ENCODE measurements at regions of chr19 and their contacts with region 1.

Region 1: GRCh38 chr19:17448131-17448967 is at the start of gene TMEM221:
- DNase-seq: peak; percentile 16 to 76 (median 59)
- ATAC-seq: peak; percentile 81
- H3K4me3 ChIP-seq: peak within 1 kb of the TSS in 1 of 2 experiments; percentile 15
- H3K4me3 Mint-ChIP-seq: peak within 1 kb of the TSS; percentile 53
- H3K27ac ChIP-seq: no peak within 1 kb of the TSS
- H3K27ac Mint-ChIP-seq: no peak within 1 kb of the TSS
- H3K4me1 ChIP-seq: no peaks in the 10 kb centered on the region
- H3K4me1 Mint-ChIP-seq: peaks cover 11% of the 10 kb centered on the region
- H3K27me3 ChIP-seq: peaks cover 3 to 20% of the 10 kb centered on the region in 2 experiments
- H3K27me3 Mint-ChIP-seq: peaks cover 17% of the 10 kb centered on the region
- CTCF ChIP-seq: peak; percentile 61
- total RNA-seq, gene TMEM221: not detected

Region 2: DNA sequence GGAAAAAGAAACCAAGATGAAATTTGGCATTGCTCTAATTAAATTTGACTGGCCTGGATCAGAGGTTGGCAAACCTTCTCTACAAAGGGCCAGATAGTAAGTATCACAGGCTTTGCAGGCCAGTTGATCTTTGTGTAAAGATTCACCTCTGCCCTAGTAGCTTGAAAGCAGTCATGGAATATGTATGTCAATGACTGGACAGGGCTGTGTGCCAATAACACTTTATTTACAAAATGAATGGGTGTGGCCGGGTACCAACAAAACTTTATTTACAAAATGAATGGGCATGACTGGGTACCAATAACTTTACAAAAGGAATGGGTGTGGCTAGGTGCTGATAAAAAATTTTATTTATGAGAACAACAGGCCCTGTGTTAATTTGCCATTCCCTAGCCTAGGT is 599.2 kb before region 1 on chr19:
- CTCF ChIA-PET with region 1: no interaction called
- POLR2A ChIA-PET with region 1: no interaction called
- intact Hi-C with region 1: no loop called
- DNase-seq: no peak
- ATAC-seq: no peak
- H3K4me3 ChIP-seq: no peak overlapping the region
- H3K4me3 Mint-ChIP-seq: no peak overlapping the region
- H3K27ac ChIP-seq: no peak overlapping the region
- H3K27ac Mint-ChIP-seq: no peak overlapping the region
- H3K4me1 ChIP-seq: no peaks in the 10 kb centered on the region
- H3K4me1 Mint-ChIP-seq: no peaks in the 10 kb centered on the region
- H3K27me3 ChIP-seq: no peaks in the 10 kb centered on the region
- H3K27me3 Mint-ChIP-seq: no peaks in the 10 kb centered on the region
- CTCF ChIP-seq: no peak

Region 3: GRCh38 chr19:17419621-17420466 is 28.5 kb before region 1 on chr19 and contains the start of gene MVB12A:
- CTCF ChIA-PET with region 1: interaction called, 4 read pairs
- POLR2A ChIA-PET with region 1: interaction called, 5 read pairs
- intact Hi-C with region 1: loop called in 1 of 2 experiments (anchors 1 kb)
- DNase-seq: peak; percentile 90 to 100 (median 96)
- ATAC-seq: peak; percentile 98
- H3K4me3 ChIP-seq: peak within 1 kb of the TSS; percentile 69 to 76
- H3K4me3 Mint-ChIP-seq: peak within 1 kb of the TSS; percentile 89
- H3K27ac ChIP-seq: peak within 1 kb of the TSS; percentile 47 to 51
- H3K27ac Mint-ChIP-seq: peak within 1 kb of the TSS; percentile 80
- H3K4me1 ChIP-seq: peaks cover 19% of the 10 kb centered on the region
- H3K4me1 Mint-ChIP-seq: peaks cover 18% of the 10 kb centered on the region
- H3K27me3 ChIP-seq: no peaks in the 10 kb centered on the region
- H3K27me3 Mint-ChIP-seq: no peaks in the 10 kb centered on the region
- CTCF ChIP-seq: no peak
- total RNA-seq, gene MVB12A: 9.1 to 10.4 TPM

Region 4: DNA sequence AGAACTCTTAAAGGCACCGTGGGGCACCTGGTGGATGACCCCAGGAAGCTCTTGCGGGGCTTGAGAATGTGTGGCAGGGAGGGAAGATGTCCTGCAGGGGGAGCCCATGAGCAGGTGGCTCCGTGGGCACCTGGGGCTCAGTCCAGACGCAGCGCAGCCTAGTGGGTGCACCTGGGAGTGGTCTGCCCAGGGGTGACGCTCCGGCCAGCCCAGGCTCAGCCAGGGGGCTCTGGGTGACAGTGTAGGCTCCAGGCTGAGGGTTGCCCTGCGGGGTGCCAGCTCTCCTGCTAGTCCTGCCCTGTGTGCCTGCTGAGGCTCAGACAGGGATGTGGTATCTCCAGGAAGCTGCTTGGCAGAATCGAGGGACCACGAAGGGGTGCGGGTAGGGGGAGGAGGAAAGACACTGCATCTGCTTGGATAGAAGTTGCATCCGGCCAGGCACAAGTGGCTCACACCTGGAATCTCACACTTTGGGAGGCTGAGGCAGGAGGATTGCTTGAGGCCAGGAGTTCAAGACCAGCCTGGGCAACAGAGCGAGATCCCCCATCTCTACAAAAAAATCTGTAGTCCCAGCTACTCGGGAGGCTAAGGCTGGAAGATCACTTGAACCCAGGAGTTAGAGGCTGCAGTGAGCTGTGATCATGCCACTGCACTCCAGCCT is 48.1 kb after region 1 on chr19:
- CTCF ChIA-PET with region 1: interaction called, 4 read pairs
- POLR2A ChIA-PET with region 1: no interaction called
- intact Hi-C with region 1: loop called in 1 of 2 experiments (anchors 1 kb)
- DNase-seq: peak; percentile 63 to 90 (median 80)
- ATAC-seq: peak; percentile 99
- H3K4me3 ChIP-seq: no peak overlapping the region
- H3K4me3 Mint-ChIP-seq: no peak overlapping the region
- H3K27ac ChIP-seq: no peak overlapping the region
- H3K27ac Mint-ChIP-seq: no peak overlapping the region
- H3K4me1 ChIP-seq: peaks cover 21% of the 10 kb centered on the region
- H3K4me1 Mint-ChIP-seq: peaks cover 27% of the 10 kb centered on the region
- H3K27me3 ChIP-seq: no peaks in the 10 kb centered on the region
- H3K27me3 Mint-ChIP-seq: no peaks in the 10 kb centered on the region
- CTCF ChIP-seq: peak; percentile 90

Region 5: GRCh38 chr19:17579661-17580244 is 131.4 kb after region 1 on chr19:
- CTCF ChIA-PET with region 1: no interaction called
- POLR2A ChIA-PET with region 1: no interaction called
- intact Hi-C with region 1: loop called (anchors 1 kb)
- DNase-seq: peak in 2 of 9 experiments; percentile 36 to 43
- ATAC-seq: peak; percentile 52
- H3K4me3 ChIP-seq: no peak overlapping the region
- H3K4me3 Mint-ChIP-seq: no peak overlapping the region
- H3K27ac ChIP-seq: no peak overlapping the region
- H3K27ac Mint-ChIP-seq: peak overlapping the region; percentile 55
- H3K4me1 ChIP-seq: no peaks in the 10 kb centered on the region
- H3K4me1 Mint-ChIP-seq: no peaks in the 10 kb centered on the region
- H3K27me3 ChIP-seq: no peaks in the 10 kb centered on the region
- H3K27me3 Mint-ChIP-seq: no peaks in the 10 kb centered on the region
- CTCF ChIP-seq: no peak

Region 6: GRCh38 chr19:17692566-17692965 is 244.2 kb after region 1 on chr19:
- CTCF ChIA-PET with region 1: no interaction called
- POLR2A ChIA-PET with region 1: no interaction called
- intact Hi-C with region 1: no loop called
- DNase-seq: no peak
- ATAC-seq: no peak
- H3K4me3 ChIP-seq: no peak overlapping the region
- H3K4me3 Mint-ChIP-seq: no peak overlapping the region
- H3K27ac ChIP-seq: no peak overlapping the region
- H3K27ac Mint-ChIP-seq: no peak overlapping the region
- H3K4me1 ChIP-seq: peaks cover 5% of the 10 kb centered on the region
- H3K4me1 Mint-ChIP-seq: peaks cover 6% of the 10 kb centered on the region
- H3K27me3 ChIP-seq: peaks cover 8 to 15% of the 10 kb centered on the region in 2 experiments
- H3K27me3 Mint-ChIP-seq: peaks cover 50% of the 10 kb centered on the region
- CTCF ChIP-seq: no peak

Region 7: GRCh38 chr19:17784201-17785008 is 336.1 kb after region 1 on chr19:
- CTCF ChIA-PET with region 1: no interaction called
- POLR2A ChIA-PET with region 1: no interaction called
- intact Hi-C with region 1: loop called in 1 of 2 experiments (anchors 5 kb)
- DNase-seq: peak; percentile 55 to 81 (median 74)
- ATAC-seq: peak; percentile 94
- H3K4me3 ChIP-seq: no peak overlapping the region
- H3K4me3 Mint-ChIP-seq: no peak overlapping the region
- H3K27ac ChIP-seq: no peak overlapping the region
- H3K27ac Mint-ChIP-seq: no peak overlapping the region
- H3K4me1 ChIP-seq: peaks cover 4% of the 10 kb centered on the region
- H3K4me1 Mint-ChIP-seq: peaks cover 11% of the 10 kb centered on the region
- H3K27me3 ChIP-seq: no peaks in the 10 kb centered on the region
- H3K27me3 Mint-ChIP-seq: no peaks in the 10 kb centered on the region
- CTCF ChIP-seq: peak; percentile 82